Posterior vena cava (tissue), 2 donors: ENCODE measurements at regions of chr2 and their contacts with region 1.

Region 1: DNA sequence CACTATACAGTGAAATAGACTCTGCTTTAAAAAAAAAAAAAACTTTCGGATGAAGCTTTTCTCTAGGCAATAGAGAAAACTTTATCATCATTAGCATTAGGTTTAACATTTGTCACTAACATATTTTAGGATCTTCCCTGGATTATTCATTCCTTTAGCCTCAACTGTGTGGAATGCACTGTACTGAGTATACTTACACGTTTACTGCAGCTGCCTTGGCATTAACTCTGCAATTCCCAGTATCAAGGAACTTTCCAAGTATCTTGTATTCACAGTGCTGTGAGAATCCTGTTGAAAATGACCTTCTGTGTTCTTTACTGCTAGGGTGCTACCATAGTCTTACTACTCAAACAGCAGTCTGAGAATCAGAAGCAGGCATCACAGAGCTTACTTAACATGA is 328.2 kb upstream of the COL3A1 start:
- DNase-seq: no peak

Region 2: DNA sequence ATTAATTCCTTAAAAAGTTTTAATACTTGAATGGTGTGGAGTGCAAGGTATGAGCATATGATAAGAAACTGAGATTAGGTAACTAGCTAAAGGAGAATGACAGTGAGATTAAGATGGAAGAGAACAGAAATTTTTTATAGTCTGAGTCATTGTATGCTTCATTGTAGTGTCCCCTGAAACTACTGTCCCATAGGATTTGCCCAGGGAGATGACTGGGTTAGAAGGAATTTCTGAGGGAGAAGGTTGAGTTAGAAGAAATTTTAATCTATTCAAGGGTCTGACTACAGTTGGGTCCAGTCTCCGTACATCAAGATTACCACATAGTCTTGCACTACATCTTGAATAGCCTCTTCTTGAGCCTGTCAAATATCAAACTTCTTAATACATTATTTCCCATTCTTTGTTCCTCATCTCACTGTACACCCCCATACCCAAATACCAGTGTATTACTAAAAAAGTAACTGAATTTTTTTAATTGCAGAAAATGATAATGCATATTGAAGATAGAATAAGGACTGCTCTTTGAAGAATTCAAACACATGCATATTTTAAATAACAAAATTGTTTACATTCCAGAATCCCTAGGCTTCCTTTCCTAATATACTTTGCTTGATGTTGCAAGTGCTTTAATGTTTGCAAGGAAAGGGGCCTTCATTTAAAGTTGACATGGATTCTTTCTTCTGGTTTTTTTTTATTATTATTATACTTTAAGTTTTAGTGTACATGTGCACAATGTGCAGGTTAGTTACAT is 13.8 kb after region 1 on chr2:
- intact Hi-C with region 1: no loop called
- DNase-seq: no peak

Region 3: GRCh38 chr2:188675391-188676009 is 29.5 kb after region 1 on chr2:
- intact Hi-C with region 1: loop called in 1 of 2 experiments (anchors 2 kb)
- DNase-seq: no peak

Region 4: GRCh38 chr2:190149908-190150307 is 1503.9 kb after region 1 on chr2:
- intact Hi-C with region 1: loop called in 1 of 2 experiments (anchors 10 kb)
- DNase-seq: no peak